Thyroid gland (tissue), 4 donors: ENCODE measurements at regions of chr3 and their contacts with region 1.

Region 1: DNA sequence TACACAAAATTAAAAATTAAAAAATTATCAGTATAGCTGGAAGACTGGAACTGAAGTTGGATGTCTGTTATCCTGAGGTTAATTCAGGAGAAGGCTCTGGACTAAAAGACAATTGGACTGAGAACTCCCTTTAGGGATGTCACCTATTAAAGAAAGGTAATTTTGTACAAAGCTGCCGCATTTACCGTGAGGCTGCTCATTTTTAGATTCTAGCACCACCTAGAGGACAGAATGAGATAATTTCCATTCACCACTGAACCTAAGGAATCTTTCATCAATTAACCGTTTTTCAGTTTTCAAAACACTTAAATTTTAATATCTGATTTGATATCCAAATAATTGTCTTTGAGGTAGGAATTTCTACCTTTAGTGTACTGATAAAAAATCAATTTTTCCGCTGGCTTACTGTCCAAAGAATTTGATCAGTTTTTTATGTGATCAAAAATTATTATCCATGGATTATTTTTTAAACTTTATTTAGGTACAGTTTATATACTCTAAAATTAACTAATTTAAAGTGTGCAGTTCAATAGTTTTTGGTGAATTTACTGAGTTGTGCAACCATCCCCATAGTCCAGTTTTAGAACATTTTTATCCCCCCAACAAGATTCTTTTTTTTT is 106.7 kb upstream of the TNIK start:
- DNase-seq: no peak
- H3K4me3 ChIP-seq: no peak overlapping the region
- H3K27ac ChIP-seq: no peak overlapping the region
- H3K4me1 ChIP-seq: peaks cover 0 to 6% of the 10 kb centered on the region in 2 donors
- H3K27me3 ChIP-seq: no peaks in the 10 kb centered on the region
- CTCF ChIP-seq: peak in 5 of 6 experiments; percentile 60 to 90 (median 70)
- POLR2A ChIP-seq: no peak

Region 2: GRCh38 chr3:170953229-170953628 is 613.7 kb before region 1 on chr3:
- intact Hi-C with region 1: loop called (anchors 10 kb)
- DNase-seq: no peak
- H3K4me3 ChIP-seq: no peak overlapping the region
- H3K27ac ChIP-seq: no peak overlapping the region
- H3K4me1 ChIP-seq: no peaks in the 10 kb centered on the region
- H3K27me3 ChIP-seq: no peaks in the 10 kb centered on the region
- CTCF ChIP-seq: no peak
- POLR2A ChIP-seq: no peak

Region 3: DNA sequence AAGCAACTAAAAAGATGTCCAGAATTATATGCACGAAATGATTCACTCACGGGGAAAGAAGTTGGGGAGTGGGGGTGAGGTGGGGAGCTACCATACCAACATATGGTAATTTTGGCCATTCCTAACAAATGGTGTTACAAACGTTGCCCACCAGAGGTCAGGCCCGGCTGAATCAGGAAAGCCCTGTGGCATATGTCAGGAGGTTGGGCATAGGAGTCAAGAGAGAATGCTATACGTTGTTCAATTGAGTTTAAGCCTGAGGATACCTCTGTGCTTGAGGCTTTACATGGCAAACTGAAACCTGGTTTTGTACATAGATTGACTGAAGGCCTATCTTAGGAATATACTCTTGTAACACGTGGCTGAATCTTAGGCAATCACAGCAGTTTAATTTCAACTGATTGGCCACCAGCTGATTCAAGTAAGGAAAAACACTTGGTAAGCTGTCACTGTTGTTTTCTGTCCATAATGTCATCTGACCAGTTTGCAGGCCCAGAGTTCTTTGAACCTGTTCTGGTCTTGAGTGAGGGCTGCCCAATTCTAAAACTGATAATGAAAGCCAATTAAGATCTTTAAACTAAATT is 517.0 kb before region 1 on chr3:
- intact Hi-C with region 1: loop called (anchors 5 kb)
- DNase-seq: peak; percentile 35 to 54
- H3K4me3 ChIP-seq: no peak overlapping the region
- H3K27ac ChIP-seq: no peak overlapping the region
- H3K4me1 ChIP-seq: no peaks in the 10 kb centered on the region
- H3K27me3 ChIP-seq: no peaks in the 10 kb centered on the region
- CTCF ChIP-seq: peak in 5 of 6 experiments; percentile 14 to 65 (median 58)
- POLR2A ChIP-seq: no peak

Region 4: DNA sequence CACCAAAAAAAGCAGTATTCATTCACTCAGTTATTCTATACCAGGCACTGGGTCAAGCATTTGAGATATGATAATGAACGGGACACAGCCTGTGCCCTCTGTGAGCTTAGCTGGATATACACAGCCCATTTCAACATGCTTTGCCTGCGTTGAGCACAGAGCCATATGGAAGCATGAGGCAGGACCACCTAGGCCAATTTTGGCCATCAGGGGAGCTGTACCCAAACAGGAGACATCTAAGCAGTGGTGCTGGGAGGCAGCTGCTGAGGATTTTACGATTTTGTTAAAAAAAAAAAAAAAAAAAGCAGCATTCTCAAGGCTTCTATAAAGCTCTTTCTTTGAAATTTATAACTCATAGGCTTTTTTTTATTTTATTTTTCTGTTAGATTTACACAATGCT is 453.2 kb before region 1 on chr3:
- intact Hi-C with region 1: no loop called
- DNase-seq: no peak
- H3K4me3 ChIP-seq: no peak overlapping the region
- H3K27ac ChIP-seq: no peak overlapping the region
- H3K4me1 ChIP-seq: no peaks in the 10 kb centered on the region
- H3K27me3 ChIP-seq: no peaks in the 10 kb centered on the region
- CTCF ChIP-seq: no peak
- POLR2A ChIP-seq: no peak